ENCODE measurements at regions of chr7 and their contacts with region 1.

Region 1: GRCh38 chr7:94374231-94374630 is 20.5 kb upstream of the COL1A2 start:
- DNase-seq: peak; percentile 60 to 73
- ATAC-seq: peak; percentile 72 to 90 (median 84)
- H3K4me3 ChIP-seq: peak overlapping the region in 5 of 10 donors; percentile 18 to 37 (median 30)
- H3K27ac ChIP-seq: peak overlapping the region; percentile 23 to 89 (median 84)
- H3K4me1 ChIP-seq: peaks cover 0 to 28% (median 0%) of the 10 kb centered on the region in 9 donors
- H3K27me3 ChIP-seq: no peaks in the 10 kb centered on the region
- CTCF ChIP-seq: peak in 3 of 9 donors; percentile 16 to 24 (median 20)

Region 2: GRCh38 chr7:94228678-94229077 is 145.6 kb before region 1 on chr7:
- intact Hi-C with region 1: no loop called
- DNase-seq: no peak
- ATAC-seq: no peak
- H3K4me3 ChIP-seq: no peak overlapping the region
- H3K27ac ChIP-seq: no peak overlapping the region
- H3K4me1 ChIP-seq: peaks cover 0 to 2% (median 0%) of the 10 kb centered on the region in 9 donors
- H3K27me3 ChIP-seq: no peaks in the 10 kb centered on the region
- CTCF ChIP-seq: no peak

Region 3: DNA sequence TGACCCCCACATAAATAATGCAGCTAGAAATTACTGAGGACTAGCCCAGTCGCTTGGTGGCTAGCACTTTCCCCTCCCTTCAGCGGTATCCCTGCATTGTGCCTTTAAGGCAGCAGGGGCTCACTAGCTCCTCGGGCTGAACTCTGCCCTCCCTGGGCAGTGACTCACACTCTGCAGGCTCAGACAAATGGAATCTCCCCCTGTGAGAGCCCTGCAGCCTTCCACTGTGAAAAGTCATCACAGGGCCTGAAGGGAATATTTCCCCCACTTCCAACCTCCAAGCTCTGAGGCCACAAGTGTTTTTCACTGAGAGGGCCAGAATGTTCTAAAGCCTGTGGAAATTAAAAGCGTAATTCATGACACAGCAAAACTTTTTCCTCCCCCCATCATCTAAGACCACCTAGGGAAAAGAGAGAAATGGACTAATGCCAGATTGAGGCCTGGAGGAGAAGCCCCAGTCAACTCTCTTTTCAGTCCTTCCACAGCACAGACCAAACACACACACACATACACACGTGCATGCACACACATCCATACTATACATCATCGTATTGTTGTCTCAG is 73.1 kb before region 1 on chr7:
- intact Hi-C with region 1: loop called in 4 of 10 experiments (anchors 1 to 5 kb)
- DNase-seq: peak; percentile 65 to 66
- ATAC-seq: peak; percentile 83 to 93 (median 86)
- H3K4me3 ChIP-seq: no peak overlapping the region
- H3K27ac ChIP-seq: peak overlapping the region; percentile 23 to 86 (median 70)
- H3K4me1 ChIP-seq: peaks cover 5 to 64% (median 27%) of the 10 kb centered on the region in 9 donors
- H3K27me3 ChIP-seq: peaks cover 0 to 6% (median 0%) of the 10 kb centered on the region in 7 donors
- CTCF ChIP-seq: peak in 1 of 9 donors; percentile 3

Region 4: DNA sequence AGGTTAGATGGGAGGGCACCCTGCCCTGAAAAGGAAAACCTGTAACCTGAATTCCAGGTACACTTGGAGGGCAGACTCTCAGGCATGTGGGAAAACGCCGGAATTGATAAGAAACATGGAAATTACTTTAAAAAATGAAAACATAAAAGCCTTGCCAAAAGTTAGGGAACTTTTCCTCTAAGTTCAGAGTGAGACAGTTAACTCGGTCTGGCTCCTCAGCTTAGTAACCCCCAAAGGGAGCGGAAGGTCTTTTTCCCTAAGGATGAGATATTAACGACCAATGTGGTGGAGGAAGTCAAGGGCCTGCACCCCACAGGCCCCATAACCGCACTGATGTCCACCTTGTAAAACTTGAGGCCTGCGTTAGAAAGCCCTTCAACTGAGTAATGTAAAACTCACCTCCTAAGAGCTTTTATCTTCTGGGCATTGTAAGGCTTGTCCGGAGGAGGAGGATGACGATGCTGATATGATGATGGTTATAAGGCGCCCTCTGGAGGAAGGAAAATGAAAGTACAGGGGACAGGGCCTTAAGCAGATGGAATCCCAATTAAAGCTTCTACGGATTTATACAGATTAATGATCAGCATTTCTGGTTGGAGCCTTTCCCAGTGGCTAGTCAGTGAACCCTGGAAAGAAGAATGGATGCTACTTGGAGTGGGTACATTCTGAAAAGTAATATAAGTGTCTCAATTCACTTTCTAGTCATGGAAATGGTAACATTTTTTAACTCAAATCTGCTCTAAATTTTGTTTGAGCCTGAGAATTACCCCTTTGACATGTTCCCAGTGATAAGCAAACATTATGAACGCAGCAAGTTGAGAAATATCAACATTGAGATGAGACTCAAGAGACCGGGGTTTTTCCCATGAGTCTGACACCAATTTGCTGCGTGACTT is 21.2 kb after region 1 on chr7:
- intact Hi-C with region 1: loop called in 3 of 10 experiments (anchors 1 to 2 kb)
- DNase-seq: peak in 1 of 2 donors; percentile 68
- ATAC-seq: peak; percentile 58 to 87 (median 78)
- H3K4me3 ChIP-seq: peak overlapping the region; percentile 33 to 71 (median 58)
- H3K27ac ChIP-seq: peak overlapping the region; percentile 77 to 91 (median 86)
- H3K4me1 ChIP-seq: peaks cover 0 to 44% (median 15%) of the 10 kb centered on the region in 9 donors
- H3K27me3 ChIP-seq: peaks cover 0 to 24% (median 6%) of the 10 kb centered on the region in 7 donors
- CTCF ChIP-seq: peak; percentile 48 to 85 (median 75)

Measured in heart right ventricle (tissue), 16 donors.